HCT116 (cell line): ENCODE measurements at regions of chr1 and their contacts with region 1.

Region 1: GRCh38 chr1:224116131-224116530 is 2.2 kb downstream of the FBXO28 start:
- DNase-seq: peak; percentile 56
- ATAC-seq: peak; percentile 48
- H3K4me3 ChIP-seq: no peak overlapping the region
- H3K27ac ChIP-seq: no peak overlapping the region
- H3K4me1 ChIP-seq: peaks cover 15 to 23% of the 10 kb centered on the region in 2 experiments; a peak in 3 of 4 replicates
- H3K27me3 ChIP-seq: no peaks in the 10 kb centered on the region
- CTCF ChIP-seq: peak; percentile 23 to 64 (median 62); a peak in 5 of 6 replicates
- POLR2A ChIP-seq: no peak
- RAD21 ChIP-seq: peak; percentile 78

Region 2: DNA sequence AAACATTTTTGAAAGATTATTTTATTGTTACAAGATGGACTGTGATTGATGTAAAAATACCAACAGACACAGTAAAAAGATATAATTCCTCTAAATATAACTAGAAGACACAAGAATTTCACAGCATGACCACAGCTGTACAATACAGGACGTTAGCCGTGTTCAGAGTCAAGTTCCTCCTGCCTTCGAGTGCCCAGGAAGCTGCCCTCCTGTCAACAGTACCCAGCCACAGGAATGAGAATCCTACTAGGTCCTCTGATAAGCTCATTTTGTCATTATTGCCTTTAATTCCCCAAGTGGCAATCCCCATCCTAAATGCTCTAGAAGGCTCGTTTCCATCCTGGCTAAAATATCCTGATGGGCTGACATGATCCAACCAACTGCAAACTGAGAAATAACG is 420.2 kb before region 1 on chr1:
- CTCF ChIA-PET with region 1: no interaction called
- POLR2A ChIA-PET with region 1: interaction called, 3 read pairs
- RAD21 ChIA-PET with region 1: no interaction called
- intact Hi-C with region 1: loop called (anchors 5 kb)
- DNase-seq: no peak
- ATAC-seq: no peak
- H3K4me3 ChIP-seq: no peak overlapping the region
- H3K27ac ChIP-seq: no peak overlapping the region
- H3K4me1 ChIP-seq: peaks cover 11 to 32% of the 10 kb centered on the region in 2 experiments
- H3K27me3 ChIP-seq: no peaks in the 10 kb centered on the region
- CTCF ChIP-seq: no peak
- POLR2A ChIP-seq: no peak
- RAD21 ChIP-seq: no peak

Region 3: GRCh38 chr1:223887747-223888418 is 228.2 kb before region 1 on chr1:
- CTCF ChIA-PET with region 1: no interaction called
- POLR2A ChIA-PET with region 1: no interaction called
- RAD21 ChIA-PET with region 1: no interaction called
- intact Hi-C with region 1: no loop called
- DNase-seq: peak; percentile 24
- ATAC-seq: peak; percentile 67
- H3K4me3 ChIP-seq: no peak overlapping the region
- H3K27ac ChIP-seq: no peak overlapping the region
- H3K4me1 ChIP-seq: peaks cover 0 to 9% of the 10 kb centered on the region in 2 experiments; a peak in 1 of 4 replicates
- H3K27me3 ChIP-seq: no peaks in the 10 kb centered on the region
- CTCF ChIP-seq: no peak
- POLR2A ChIP-seq: no peak
- RAD21 ChIP-seq: no peak

Region 4: DNA sequence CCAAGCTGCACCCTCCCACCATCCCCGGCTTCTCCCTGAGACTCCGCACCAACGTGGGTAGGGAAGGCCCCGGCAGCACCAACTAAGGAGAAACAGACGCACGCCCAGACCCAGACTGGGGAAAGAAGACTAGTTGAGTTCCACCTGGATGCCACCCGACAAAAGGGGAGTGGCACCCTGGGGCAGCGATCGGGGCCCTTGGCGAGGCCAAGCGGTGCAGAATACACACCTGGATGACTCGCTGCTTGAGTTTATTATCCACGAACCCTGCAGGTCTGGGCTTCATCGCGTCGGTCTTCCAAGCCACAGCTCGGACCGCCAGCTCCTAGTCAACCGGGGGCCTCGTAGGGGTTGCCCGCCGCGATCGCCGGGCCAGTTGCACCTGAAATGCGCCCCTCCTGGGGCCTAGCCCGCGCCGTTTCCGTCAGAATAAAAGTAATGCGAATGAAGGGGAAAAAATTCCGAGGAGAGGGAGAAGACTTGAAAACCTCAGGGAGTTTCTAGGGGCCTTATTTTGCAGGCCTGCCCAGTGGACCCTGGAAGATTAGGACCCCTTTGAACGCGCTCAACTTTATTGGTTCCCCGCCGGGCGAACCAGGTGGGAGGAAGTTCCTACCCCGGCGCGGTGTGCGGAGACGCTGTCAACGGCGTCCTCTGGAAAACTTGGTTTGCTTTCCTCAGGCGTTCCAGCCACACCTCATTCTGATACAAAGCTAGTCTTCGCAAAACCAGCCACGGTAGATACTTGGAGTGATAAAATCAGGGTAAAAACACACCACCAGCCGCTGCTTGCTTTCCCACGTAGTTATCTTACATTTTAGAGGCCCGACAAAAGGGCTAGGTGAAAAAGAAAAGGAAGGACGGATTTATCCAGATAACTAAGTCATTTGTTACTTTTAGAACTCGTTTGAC is 214.0 kb after region 1 on chr1 and contains the start of gene NVL:
- CTCF ChIA-PET with region 1: interaction called, 15 read pairs
- POLR2A ChIA-PET with region 1: no interaction called
- RAD21 ChIA-PET with region 1: no interaction called
- intact Hi-C with region 1: loop called (anchors 1 kb)
- DNase-seq: peak; percentile 86
- ATAC-seq: peak; percentile 89
- H3K4me3 ChIP-seq: peak within 1 kb of the TSS; percentile 93 to 99
- H3K27ac ChIP-seq: peak within 1 kb of the TSS; percentile 82
- H3K4me1 ChIP-seq: peaks cover 12 to 16% of the 10 kb centered on the region in 2 experiments
- H3K27me3 ChIP-seq: no peaks in the 10 kb centered on the region
- CTCF ChIP-seq: no peak
- POLR2A ChIP-seq: peak; percentile 15
- RAD21 ChIP-seq: peak; percentile 31; the same call in 1 of the 2 replicates
- total RNA-seq, gene NVL: 21.9 TPM

Region 5: DNA sequence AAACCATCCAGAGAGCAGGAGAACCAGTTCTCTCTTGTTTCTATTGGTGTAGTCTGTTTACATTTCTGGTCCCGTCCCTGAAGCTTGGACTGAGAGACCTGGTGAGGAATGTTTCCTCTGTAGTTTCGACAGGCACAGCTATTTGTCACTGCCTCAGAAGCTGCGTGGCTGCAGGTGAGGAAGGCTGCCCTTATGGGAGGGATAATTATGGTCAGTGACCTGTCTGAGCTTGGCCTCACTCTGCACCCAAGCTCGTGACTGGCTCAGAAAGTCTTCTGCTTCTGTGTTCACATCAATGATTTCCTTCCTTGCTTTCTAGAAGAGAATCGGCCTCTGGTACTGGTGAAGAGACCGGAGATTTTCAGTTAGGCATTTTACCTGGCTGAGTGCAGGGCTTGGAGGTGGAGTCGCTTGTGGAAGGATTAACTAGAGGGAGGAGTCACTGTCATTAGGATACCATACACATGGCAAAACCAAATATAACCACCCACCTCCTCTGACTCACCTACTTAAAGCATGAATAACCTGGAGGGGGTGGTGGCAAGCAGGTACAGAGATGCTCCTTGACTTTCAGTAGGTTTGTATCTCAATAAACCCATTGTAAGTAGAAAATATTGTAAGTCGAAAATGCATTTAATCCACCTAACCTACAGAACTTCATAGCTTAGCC is 338.4 kb after region 1 on chr1:
- CTCF ChIA-PET with region 1: interaction called, 20 read pairs
- POLR2A ChIA-PET with region 1: no interaction called
- RAD21 ChIA-PET with region 1: no interaction called
- intact Hi-C with region 1: loop called (anchors 1 kb)
- DNase-seq: no peak
- ATAC-seq: peak; percentile 69
- H3K4me3 ChIP-seq: no peak overlapping the region
- H3K27ac ChIP-seq: no peak overlapping the region
- H3K4me1 ChIP-seq: peaks cover 7 to 26% of the 10 kb centered on the region in 2 experiments; a peak in 3 of 4 replicates
- H3K27me3 ChIP-seq: no peaks in the 10 kb centered on the region
- CTCF ChIP-seq: no peak
- POLR2A ChIP-seq: no peak
- RAD21 ChIP-seq: no peak